A673 (cell line): ENCODE measurements at regions of chr1 and their contacts with region 1.

Region 1: GRCh38 chr1:161242313-161242712 is 4.3 kb upstream of the NR1I3 start:
- DNase-seq: no peak
- H3K4me3 ChIP-seq: no peak overlapping the region
- H3K27ac ChIP-seq: no peak overlapping the region
- H3K4me1 ChIP-seq: no peaks in the 10 kb centered on the region
- H3K27me3 ChIP-seq: no peaks in the 10 kb centered on the region
- CTCF ChIP-seq: no peak

Region 2: DNA sequence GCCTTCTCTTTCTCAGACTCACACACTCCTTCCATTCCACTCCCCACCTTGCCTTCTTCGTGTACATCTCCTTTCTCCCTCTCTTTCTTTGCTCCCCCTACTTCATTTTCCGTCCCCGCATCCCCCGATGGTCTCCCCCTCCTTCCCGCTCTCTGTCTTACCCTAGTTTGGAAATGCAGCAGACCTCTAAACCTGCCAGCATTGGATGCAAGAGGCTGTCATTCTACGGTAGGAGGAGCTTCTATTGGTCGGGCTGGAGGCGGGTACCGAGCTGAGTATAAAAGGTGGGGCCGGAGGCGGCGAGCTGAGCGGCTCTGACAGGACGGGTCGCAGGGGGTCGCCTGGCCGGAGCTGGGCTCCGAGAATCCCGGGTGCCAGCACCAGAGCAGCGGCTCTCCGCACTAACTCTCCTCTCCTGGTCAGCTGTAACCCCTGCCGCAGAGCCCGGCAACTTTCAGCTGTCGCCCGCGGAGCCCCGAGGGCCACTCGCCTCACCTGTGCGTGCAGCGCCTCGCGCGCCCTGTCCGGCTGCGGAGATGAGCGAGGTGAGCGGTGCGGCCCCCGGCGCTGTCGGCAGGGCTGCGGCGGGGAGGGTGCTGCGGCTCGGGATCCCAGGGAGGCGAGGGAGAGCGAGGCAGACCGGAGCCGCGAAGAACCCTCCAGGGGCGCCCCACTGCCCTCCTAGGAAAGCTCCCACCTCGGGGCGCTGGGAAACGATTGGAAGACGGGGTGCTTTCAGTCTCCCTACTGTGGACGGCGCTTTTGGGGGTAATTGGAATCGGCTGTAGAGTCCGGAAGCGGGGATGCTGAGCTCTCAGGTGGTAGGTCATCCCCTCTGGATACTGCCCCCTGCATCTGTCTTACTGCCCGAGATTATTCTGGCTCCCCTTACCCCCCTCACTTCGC is 16.4 kb after region 1 on chr1 and contains the start of gene PCP4L1:
- CTCF ChIA-PET with region 1: no interaction called
- POLR2A ChIA-PET with region 1: interaction called, 18 read pairs
- intact Hi-C with region 1: no loop called
- DNase-seq: peak; percentile 68
- H3K4me3 ChIP-seq: peak within 1 kb of the TSS; percentile 48
- H3K27ac ChIP-seq: no peak within 1 kb of the TSS
- H3K4me1 ChIP-seq: peaks cover 13% of the 10 kb centered on the region
- H3K27me3 ChIP-seq: peaks cover 25% of the 10 kb centered on the region
- CTCF ChIP-seq: no peak
- total RNA-seq, gene PCP4L1: not detected in 2 replicates